ENCODE measurements at regions of chr5 and their contacts with region 1.

Region 1: DNA sequence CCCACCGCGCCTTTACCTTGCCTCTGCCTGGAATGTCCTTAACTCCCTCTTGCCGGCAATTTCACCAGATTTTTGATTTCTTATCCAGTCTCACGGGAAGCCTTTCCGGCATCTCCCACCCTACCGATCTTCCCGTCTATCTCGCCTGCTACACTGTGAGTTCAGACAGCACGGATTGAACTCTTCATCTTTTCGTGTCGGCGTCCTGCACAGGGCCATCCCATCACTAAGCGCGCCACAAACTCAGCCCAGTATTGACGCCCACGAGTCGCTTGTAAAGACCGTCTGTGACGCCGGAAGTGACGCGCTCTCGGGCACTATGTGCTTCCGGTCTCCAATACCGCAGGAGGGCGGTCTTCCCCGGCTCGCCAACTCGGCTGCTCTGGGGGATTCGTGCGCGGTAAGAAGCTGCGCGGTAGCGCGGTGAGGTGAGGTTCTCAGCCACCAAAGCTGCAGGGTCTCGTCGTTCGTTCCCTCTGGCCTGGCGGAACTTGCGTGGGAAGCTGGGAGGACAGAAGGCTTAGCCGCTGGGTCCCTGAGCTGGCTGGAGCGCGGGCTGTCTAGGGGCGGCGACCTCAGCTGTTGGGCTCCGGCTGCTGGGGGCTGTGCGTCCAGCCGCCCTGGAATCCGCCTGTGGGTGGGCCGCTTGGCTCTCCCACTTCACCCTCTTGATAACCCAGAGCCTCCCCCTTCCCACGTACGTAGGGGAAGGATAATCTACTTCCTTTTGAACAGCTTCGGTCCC is at the start of gene ZCCHC9:
- DNase-seq: peak; percentile 73 to 95
- ATAC-seq: peak; percentile 97 to 99
- H3K4me3 ChIP-seq: peak within 1 kb of the TSS; percentile 73
- H3K27ac ChIP-seq: peak within 1 kb of the TSS; percentile 86 to 99
- H3K4me1 ChIP-seq: peaks cover 23% of the 10 kb centered on the region
- CTCF ChIP-seq: no peak
- EP300 ChIP-seq: no peak
- POLR2A ChIP-seq: peak; percentile 94
- RAD21 ChIP-seq: no peak
- polyA plus RNA-seq, gene ZCCHC9: 27.3 and 44.4 TPM in 2 replicates

Region 2: GRCh38 chr5:80686757-80687156 is 614.7 kb before region 1 on chr5:
- CTCF ChIA-PET with region 1: interaction called, 10 read pairs
- POLR2A ChIA-PET with region 1: no interaction called
- DNase-seq: peak in 1 of 2 experiments; percentile 9
- ATAC-seq: no peak
- H3K4me3 ChIP-seq: no peak overlapping the region
- H3K27ac ChIP-seq: no peak overlapping the region
- H3K4me1 ChIP-seq: no peaks in the 10 kb centered on the region
- CTCF ChIP-seq: peak; percentile 44
- EP300 ChIP-seq: no peak
- POLR2A ChIP-seq: no peak
- RAD21 ChIP-seq: peak; percentile 43 to 69

Region 3: DNA sequence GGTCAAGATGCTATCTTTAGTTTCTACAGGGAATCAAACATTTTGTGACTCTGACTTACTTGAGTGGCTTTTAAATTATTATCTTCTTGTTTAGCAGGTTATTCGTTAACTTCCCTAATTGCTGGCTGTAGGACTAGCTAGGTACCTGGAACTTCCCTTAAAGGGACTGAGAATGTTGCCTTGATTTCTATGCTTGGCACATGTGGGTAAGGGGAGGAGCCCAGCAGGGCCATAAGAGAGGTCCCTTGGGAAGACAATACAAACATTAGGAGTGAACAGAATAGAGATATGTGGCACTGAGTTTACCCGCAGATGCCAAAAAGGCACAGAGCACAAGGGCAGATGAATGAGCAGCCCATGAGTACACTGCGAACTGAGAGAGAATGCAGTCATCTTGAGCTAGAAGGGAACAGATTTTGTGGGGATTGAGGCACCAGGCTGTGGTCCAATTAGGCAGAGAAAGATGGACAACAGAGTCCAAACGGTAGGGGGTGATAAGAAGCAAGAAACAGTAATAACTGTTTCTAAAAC is 58.5 kb before region 1 on chr5:
- CTCF ChIA-PET with region 1: interaction called, 12 read pairs
- POLR2A ChIA-PET with region 1: no interaction called
- DNase-seq: no peak
- ATAC-seq: no peak
- H3K4me3 ChIP-seq: no peak overlapping the region
- H3K27ac ChIP-seq: no peak overlapping the region
- H3K4me1 ChIP-seq: peaks cover 28% of the 10 kb centered on the region
- CTCF ChIP-seq: no peak
- EP300 ChIP-seq: no peak
- POLR2A ChIP-seq: no peak
- RAD21 ChIP-seq: no peak

Region 4: GRCh38 chr5:81315336-81315735 is 13.9 kb after region 1 on chr5:
- CTCF ChIA-PET with region 1: interaction called, 15 read pairs
- POLR2A ChIA-PET with region 1: no interaction called
- DNase-seq: no peak
- ATAC-seq: peak in 1 of 2 experiments; percentile 13; a peak in 1 of 6 replicates
- H3K4me3 ChIP-seq: no peak overlapping the region
- H3K27ac ChIP-seq: no peak overlapping the region
- H3K4me1 ChIP-seq: no peaks in the 10 kb centered on the region
- CTCF ChIP-seq: no peak
- EP300 ChIP-seq: no peak
- POLR2A ChIP-seq: no peak
- RAD21 ChIP-seq: no peak